Activated B cell treated with CpG ODN at 0.5 μM for 24 hours (primary cell): ENCODE measurements at regions of chr18 and their contacts with region 1.

Region 1: DNA sequence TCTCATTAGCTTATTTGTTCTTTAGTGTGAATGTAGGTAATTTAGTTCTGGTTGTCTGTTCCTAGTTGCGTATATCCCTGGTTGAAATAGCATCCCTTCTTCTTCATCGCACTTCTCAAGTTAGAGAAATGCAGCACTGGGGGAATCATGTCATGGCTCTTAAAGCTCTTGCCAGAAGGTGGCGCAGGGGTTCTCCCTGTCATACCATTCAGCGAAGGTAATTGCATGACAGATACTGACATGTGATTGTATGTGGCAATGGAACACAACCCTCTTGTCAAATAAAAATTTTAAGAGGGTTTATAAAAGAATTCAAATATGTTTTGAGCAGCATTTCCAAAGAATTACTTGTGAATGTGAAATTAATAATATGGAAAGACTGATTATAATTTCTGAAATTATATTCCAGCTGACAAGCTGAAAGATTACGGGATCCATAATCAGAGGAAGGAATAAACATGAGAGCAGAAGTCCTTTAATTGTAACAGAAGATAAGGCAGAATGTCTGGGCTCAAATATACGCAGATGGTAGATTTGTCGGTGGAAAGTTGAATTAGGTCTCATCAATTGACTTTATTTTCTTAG is 411.7 kb downstream of the DSEL start:
- DNase-seq: no peak
- ATAC-seq: no peak
- H3K4me3 Mint-ChIP-seq: no peak overlapping the region
- H3K27ac Mint-ChIP-seq: no peak overlapping the region
- H3K4me1 Mint-ChIP-seq: no peaks in the 10 kb centered on the region
- H3K27me3 Mint-ChIP-seq: no peaks in the 10 kb centered on the region
- CTCF ChIP-seq: no peak

Region 2: GRCh38 chr18:67199993-67200617 is 95.3 kb after region 1 on chr18:
- CTCF ChIA-PET with region 1: no interaction called
- POLR2A ChIA-PET with region 1: no interaction called
- intact Hi-C with region 1: loop called (anchors 2 kb)
- DNase-seq: no peak
- ATAC-seq: peak; percentile 34
- H3K4me3 Mint-ChIP-seq: no peak overlapping the region
- H3K27ac Mint-ChIP-seq: no peak overlapping the region
- H3K4me1 Mint-ChIP-seq: no peaks in the 10 kb centered on the region
- H3K27me3 Mint-ChIP-seq: no peaks in the 10 kb centered on the region
- CTCF ChIP-seq: no peak

Region 3: GRCh38 chr18:68735483-68736343 is 1630.9 kb after region 1 on chr18:
- CTCF ChIA-PET with region 1: no interaction called
- POLR2A ChIA-PET with region 1: no interaction called
- intact Hi-C with region 1: loop called (anchors 10 kb)
- DNase-seq: no peak
- ATAC-seq: peak; percentile 49
- H3K4me3 Mint-ChIP-seq: no peak overlapping the region
- H3K27ac Mint-ChIP-seq: no peak overlapping the region
- H3K4me1 Mint-ChIP-seq: no peaks in the 10 kb centered on the region
- H3K27me3 Mint-ChIP-seq: no peaks in the 10 kb centered on the region
- CTCF ChIP-seq: no peak